Posterior vena cava (tissue), 2 donors: ENCODE measurements at regions of chr12 and their contacts with region 1.

Region 1: DNA sequence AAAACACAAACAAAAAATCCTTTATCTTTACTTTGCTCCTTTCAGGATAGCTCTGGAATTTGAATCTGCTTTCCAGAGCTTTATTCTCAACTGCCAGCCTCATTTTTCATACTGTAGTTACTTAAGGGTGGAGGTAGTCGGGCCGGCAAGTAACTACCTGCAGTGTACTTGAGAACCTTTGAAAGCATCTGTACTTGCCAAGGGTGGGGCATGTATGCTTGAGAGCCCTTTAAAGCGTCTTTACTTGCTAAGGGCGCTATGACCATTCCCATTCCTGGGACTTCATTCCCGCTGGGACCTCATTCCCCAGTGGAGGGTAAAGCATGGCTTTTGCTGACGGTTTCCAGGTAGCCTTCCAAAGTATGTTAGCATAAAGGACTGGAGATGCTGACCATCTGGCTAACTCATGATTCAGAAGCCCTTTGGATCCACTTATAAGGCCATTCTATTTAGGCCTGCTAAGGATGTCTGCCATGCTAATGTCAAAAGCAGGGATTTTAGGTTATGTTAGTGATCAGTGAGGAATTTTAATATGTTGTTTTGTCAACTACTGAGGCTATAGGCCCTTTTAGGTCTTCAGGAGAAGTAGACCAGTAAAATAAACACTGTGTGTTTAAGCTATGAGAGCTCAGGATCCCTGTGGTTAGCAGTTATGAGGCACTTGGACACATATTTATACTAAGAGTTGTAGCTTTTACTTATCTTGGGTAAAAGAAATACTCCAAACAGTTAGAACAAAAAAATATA is 74.9 kb downstream of the CRADD start:
- DNase-seq: no peak

Region 2: GRCh38 chr12:93766796-93767523 is 14.9 kb after region 1 on chr12:
- intact Hi-C with region 1: loop called in 1 of 2 experiments (anchors 1 kb)
- DNase-seq: no peak

Region 3: GRCh38 chr12:93785262-93786010 is 33.4 kb after region 1 on chr12:
- intact Hi-C with region 1: no loop called
- DNase-seq: peak; percentile 80

Region 4: GRCh38 chr12:93819050-93819491 is 67.0 kb after region 1 on chr12:
- intact Hi-C with region 1: no loop called
- DNase-seq: peak; percentile 86

Region 5: GRCh38 chr12:94792693-94793092 is 1040.7 kb after region 1 on chr12:
- intact Hi-C with region 1: loop called in 1 of 2 experiments (anchors 5 kb)
- DNase-seq: no peak